Common myeloid progenitor, CD34-positive (primary cell): ENCODE measurements at regions of chr2 and their contacts with region 1.

Region 1: DNA sequence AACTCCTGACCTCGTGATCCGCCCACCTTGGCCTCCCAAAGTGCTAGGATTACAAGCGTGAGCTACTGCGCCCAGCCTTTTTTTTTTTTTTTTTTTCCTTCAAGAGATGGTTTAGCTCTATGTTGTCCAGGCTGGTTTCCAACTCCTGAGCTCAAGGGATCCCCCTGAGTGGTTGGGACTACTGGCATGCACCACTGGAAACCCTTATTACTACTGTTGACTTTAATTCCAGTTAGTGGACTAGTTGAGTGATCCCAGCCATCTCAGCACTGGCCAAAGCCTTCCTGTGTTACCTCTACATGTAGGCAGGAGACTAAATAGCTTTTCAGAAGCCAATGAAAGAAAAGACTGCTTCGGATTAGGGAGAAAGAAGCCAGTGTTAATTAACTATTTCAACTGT is 8.1 kb upstream of the SSB start:
- DNase-seq: no peak
- H3K4me3 ChIP-seq: no peak overlapping the region
- H3K27ac ChIP-seq: no peak overlapping the region
- H3K4me1 ChIP-seq: peaks cover 0 to 12% (median 2%) of the 10 kb centered on the region in 4 experiments
- H3K27me3 ChIP-seq: no peaks in the 10 kb centered on the region

Region 2: GRCh38 chr2:168614172-168615018 is 1176.2 kb before region 1 on chr2:
- CTCF ChIA-PET with region 1: no interaction called
- POLR2A ChIA-PET with region 1: no interaction called
- DNase-seq: no peak
- H3K4me3 ChIP-seq: no peak overlapping the region
- H3K27ac ChIP-seq: no peak overlapping the region
- H3K4me1 ChIP-seq: peaks cover 0 to 2% (median 0%) of the 10 kb centered on the region in 4 experiments
- H3K27me3 ChIP-seq: no peaks in the 10 kb centered on the region

Region 3: GRCh38 chr2:169528271-169528701 is 262.3 kb before region 1 on chr2:
- CTCF ChIA-PET with region 1: interaction called, 13 read pairs
- POLR2A ChIA-PET with region 1: no interaction called
- DNase-seq: peak; percentile 61 to 83 (median 75)
- H3K4me3 ChIP-seq: no peak overlapping the region
- H3K27ac ChIP-seq: no peak overlapping the region
- H3K4me1 ChIP-seq: no peaks in the 10 kb centered on the region
- H3K27me3 ChIP-seq: no peaks in the 10 kb centered on the region

Region 4: DNA sequence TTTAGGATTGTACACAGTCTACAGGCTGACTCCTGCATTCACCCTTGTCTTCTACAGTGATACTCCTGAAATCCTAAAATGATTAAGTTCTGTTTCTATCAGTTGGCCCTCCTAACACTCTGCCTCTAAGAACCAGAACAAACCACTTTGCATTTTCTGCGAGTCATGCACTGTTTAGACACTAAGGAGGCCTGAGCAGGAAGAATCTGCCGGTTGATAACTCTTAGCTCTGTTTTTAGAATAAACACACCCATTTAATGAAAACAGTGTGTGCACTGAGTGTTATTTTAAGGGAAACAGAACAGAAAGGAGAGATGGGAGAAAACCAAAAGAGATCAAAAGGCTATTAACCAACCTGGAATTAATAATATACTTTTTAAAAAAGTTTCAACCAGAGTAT is 14.8 kb before region 1 on chr2:
- CTCF ChIA-PET with region 1: interaction called, 11 read pairs
- POLR2A ChIA-PET with region 1: no interaction called
- DNase-seq: peak in 2 of 3 donors; percentile 30 to 42
- H3K4me3 ChIP-seq: no peak overlapping the region
- H3K27ac ChIP-seq: no peak overlapping the region
- H3K4me1 ChIP-seq: peaks cover 0 to 24% (median 1%) of the 10 kb centered on the region in 4 experiments
- H3K27me3 ChIP-seq: no peaks in the 10 kb centered on the region